ENCODE measurements at regions of chr2 and their contacts with region 1.

Region 1: GRCh38 chr2:27890146-27890923 is at the starts of genes BABAM2 and RBKS:
- H3K4me3 Mint-ChIP-seq: peak within 1 kb of the TSS; percentile 97
- H3K27ac Mint-ChIP-seq: peak within 1 kb of the TSS; percentile 99
- H3K4me1 Mint-ChIP-seq: peaks cover 56% of the 10 kb centered on the region
- H3K27me3 Mint-ChIP-seq: no peaks in the 10 kb centered on the region

Region 2: DNA sequence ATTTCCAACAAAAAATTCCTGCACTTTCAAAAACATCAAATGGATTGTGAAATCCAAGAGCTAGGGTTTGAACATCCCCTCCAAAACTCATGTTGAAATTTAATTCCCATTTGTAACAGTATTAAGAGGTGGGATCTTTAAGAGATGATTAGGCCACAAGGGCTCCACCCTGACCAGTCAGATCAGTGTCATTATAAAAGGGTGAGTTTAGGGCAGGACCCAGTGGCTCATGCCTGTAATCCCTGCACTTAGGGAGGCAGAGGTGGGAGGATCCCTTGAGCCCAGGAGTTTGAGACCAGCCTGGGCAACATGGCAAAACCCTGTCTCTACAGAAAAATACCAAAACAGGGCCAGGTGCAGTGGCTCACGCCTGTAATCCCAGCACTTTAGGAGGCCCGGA is 542.7 kb before region 1 on chr2:
- intact Hi-C with region 1: no loop called
- H3K4me3 Mint-ChIP-seq: no peak overlapping the region
- H3K27ac Mint-ChIP-seq: no peak overlapping the region
- H3K4me1 Mint-ChIP-seq: peaks cover 24% of the 10 kb centered on the region
- H3K27me3 Mint-ChIP-seq: no peaks in the 10 kb centered on the region

Region 3: DNA sequence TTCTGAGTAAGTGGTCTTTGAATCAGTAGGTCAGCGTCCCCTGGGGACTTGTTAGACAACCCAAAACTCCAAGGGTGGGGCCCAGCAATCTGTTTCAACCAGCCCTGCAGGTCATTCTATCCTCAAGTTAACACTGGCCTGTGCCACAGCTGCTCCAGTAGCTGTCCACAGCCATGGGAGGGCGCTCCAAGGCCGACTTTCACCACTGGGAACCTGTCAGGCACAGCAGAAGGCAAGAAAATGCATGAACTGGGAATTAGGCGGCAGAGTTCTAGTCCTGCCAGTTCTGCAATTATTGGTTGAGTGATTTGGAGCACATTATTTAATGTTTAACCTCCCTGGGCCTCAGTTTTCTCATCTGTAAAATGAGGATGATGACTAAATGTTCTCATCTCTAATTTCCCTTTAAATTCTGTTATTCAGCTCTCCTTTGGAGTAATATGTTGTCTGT is 136.2 kb before region 1 on chr2:
- intact Hi-C with region 1: loop called (anchors 10 kb)
- H3K4me3 Mint-ChIP-seq: no peak overlapping the region
- H3K27ac Mint-ChIP-seq: peak overlapping the region; percentile 83
- H3K4me1 Mint-ChIP-seq: peaks cover 39% of the 10 kb centered on the region
- H3K27me3 Mint-ChIP-seq: no peaks in the 10 kb centered on the region

Region 4: DNA sequence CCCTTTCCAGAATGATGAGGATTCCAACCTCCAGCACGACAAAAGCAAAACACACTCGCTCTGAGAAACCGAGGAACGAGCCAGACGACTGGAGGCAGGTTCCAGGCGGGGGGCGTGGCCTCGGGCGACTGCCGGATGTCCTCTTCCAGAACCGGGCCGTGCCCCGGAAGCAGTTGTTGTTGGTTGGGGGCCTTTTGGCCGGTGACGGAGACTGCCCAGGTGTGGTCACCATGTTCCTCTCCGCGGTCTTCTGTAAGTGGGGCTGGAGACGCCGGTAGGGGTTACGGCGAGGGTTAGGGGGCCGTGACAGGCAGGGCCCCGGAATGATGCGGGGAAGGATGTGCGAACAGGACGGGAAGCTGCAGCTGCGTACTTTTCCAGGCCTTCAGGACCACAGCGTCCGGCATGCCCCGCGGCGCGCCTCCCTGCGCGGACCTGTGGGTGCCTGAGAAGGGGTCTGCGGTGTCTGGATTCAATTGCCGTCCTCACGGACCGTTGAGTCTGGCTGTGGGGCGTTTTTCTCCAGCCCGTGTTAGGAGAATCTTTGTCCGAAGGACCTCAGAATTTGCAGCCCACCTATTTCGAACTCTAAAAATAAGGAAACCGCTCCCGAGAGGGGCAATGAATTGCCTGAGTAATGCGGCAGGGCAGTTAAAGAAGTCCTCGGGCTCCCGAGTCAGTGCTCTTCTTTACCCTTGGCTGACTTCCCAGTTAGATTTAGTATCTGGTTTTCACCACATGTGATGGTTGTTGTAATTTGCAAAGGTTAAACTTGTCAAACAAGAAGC is 118.6 kb before region 1 on chr2 and contains the start of gene MRPL33:
- intact Hi-C with region 1: loop called (anchors 5 kb)
- H3K4me3 Mint-ChIP-seq: peak within 1 kb of the TSS; percentile 97
- H3K27ac Mint-ChIP-seq: peak within 1 kb of the TSS; percentile 99
- H3K4me1 Mint-ChIP-seq: peaks cover 51% of the 10 kb centered on the region
- H3K27me3 Mint-ChIP-seq: no peaks in the 10 kb centered on the region

Region 5: DNA sequence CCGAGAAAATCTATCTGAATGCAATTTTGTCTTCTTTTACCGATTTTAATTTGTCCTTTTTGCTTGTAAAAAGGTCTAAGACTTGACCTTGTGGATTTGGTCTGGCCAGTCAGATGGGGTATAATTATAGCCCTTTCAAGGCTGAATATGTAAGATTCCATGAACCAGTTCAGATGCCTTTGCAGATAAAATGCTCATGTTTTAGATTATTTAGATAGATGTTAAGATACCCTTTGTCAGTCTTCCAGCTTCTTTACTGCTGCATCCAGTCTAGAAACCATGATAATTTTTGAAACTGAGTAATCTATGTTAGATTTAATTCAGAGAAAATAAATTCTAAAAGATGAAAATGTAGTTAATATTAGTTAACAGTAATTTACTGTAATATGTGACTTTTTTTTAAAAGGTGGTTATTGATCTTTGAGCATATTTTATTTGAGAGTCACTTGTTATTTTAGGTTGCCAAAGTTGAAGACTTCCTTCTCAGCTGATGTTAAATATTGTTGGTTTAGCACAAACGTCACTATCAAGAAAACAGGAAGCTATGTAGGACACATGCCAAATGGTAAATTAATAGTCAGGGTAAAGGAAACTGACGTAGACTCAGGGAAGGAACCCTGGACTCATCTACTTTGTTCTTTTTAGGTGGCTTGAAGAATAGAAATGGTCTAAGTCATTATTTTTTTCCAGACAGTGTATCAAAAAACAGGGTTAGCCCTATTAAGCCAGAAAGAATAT is 30.0 kb after region 1 on chr2:
- intact Hi-C with region 1: loop called (anchors 1 kb)
- H3K4me3 Mint-ChIP-seq: no peak overlapping the region
- H3K27ac Mint-ChIP-seq: peak overlapping the region; percentile 27
- H3K4me1 Mint-ChIP-seq: peaks cover 5% of the 10 kb centered on the region
- H3K27me3 Mint-ChIP-seq: no peaks in the 10 kb centered on the region

Region 6: GRCh38 chr2:27954771-27955383 is 64.5 kb after region 1 on chr2:
- intact Hi-C with region 1: loop called (anchors 5 kb)
- H3K4me3 Mint-ChIP-seq: no peak overlapping the region
- H3K27ac Mint-ChIP-seq: peak overlapping the region; percentile 34
- H3K4me1 Mint-ChIP-seq: peaks cover 72% of the 10 kb centered on the region
- H3K27me3 Mint-ChIP-seq: no peaks in the 10 kb centered on the region

Region 7: DNA sequence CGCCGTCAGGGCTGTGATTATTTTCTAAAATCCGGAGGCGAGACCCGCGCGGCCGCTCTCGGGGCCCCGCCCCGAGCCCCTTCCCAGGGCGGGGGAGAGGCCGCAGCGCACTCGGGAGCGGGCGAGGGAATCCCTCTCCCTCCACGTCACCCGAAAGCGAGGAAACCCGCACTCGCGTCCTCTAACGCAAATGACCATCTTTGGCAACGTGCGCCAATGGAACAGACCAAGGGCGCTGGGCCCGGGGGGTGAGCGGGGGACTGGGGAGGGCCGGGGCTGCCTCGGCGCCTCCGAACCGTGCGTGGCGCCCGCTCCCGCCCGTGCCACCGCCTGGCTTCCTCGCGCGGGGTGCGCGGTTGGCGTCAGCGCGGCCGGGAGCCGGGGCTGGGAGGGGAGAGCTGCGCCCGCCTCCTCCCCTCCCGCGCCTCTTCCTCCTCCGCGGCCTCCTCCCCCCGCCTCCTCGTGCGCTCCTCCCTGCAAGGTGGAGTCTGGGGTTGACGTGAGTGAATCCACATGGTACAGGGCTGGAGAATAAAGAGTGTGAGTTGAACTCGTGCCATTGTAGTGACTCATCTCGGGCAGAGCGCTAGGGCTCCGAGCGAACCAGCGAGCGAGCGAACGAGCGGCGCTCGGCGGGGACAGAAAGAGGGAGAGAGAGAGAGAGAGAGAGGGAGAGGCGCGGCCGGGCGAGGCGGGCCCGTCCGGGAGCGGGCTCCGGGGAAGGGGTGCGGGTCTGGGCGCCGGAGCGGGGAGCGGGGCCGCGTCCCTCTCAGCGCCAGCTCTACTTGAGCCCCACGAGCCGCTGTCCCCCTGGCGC is 502.2 kb after region 1 on chr2 and contains the start of gene FOSL2:
- intact Hi-C with region 1: loop called (anchors 5 kb)
- H3K4me3 Mint-ChIP-seq: peak within 1 kb of the TSS; percentile 82
- H3K27ac Mint-ChIP-seq: no peak within 1 kb of the TSS
- H3K4me1 Mint-ChIP-seq: peaks cover 22% of the 10 kb centered on the region
- H3K27me3 Mint-ChIP-seq: peaks cover 12% of the 10 kb centered on the region

Region 8: GRCh38 chr2:28445448-28446258 is 555.3 kb after region 1 on chr2:
- intact Hi-C with region 1: loop called (anchors 5 kb)
- H3K4me3 Mint-ChIP-seq: no peak overlapping the region
- H3K27ac Mint-ChIP-seq: peak overlapping the region; percentile 92
- H3K4me1 Mint-ChIP-seq: peaks cover 82% of the 10 kb centered on the region
- H3K27me3 Mint-ChIP-seq: no peaks in the 10 kb centered on the region

Measured in dendritic cell treated with granulocyte-macrophage colony-stimulating factor and Interleukin-4, amounts not matched to agents 40 ng/mL and 50 ng/mL, for 4 days (primary cell).